ENCODE measurements at regions of chr4 and their contacts with region 1.

Region 1: DNA sequence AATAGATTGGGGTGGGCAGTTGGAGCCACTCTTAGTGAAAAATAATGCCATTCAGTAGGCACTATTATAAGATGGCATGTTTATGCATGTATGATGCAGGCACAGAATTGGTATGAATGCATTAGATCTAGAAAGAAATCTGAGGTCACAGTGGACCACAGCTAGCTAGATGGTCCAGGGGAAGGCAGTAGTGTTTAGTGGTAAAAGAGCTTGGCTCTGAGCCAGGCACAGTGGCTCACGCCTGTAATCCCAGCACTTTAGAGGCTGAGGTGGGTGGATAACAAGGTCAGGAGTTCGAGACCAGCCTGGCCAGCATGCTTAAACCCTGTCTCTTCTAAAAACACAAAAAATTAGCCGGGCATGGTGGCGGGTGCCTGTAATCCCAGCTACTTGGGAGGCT is 43.2 kb upstream of the SLC34A2 start:
- DNase-seq: no peak
- ATAC-seq: no peak
- H3K4me3 ChIP-seq: no peak overlapping the region
- H3K27ac ChIP-seq: peak overlapping the region; percentile 27
- H3K4me1 ChIP-seq: peaks cover 6% of the 10 kb centered on the region; the same call in 1 of the 2 replicates
- H3K27me3 ChIP-seq: no peaks in the 10 kb centered on the region
- CTCF ChIP-seq: no peak

Region 2: DNA sequence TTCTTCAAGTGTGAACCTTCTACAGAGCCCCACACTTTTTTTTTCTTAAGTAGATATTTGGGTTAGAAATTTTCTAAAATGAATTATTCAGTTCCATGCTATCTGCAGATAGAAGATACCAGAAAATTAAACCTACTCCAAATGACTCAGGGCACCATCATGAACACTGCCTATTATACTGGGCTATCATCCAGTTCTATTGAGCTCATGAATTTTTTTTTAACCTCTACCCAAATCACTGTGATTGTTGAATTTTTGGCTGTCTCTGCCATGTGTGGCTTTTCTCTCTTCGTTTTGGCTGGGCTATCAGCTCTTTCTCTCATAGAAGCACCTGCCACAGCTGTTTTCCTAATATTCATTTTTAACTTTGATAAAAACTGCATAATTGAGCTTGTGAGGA is 12.1 kb after region 1 on chr4:
- CTCF ChIA-PET with region 1: no interaction called
- POLR2A ChIA-PET with region 1: interaction called, 14 read pairs
- intact Hi-C with region 1: no loop called
- DNase-seq: peak; percentile 42
- ATAC-seq: peak; percentile 31; the same call in 1 of the 2 replicates
- H3K4me3 ChIP-seq: no peak overlapping the region
- H3K27ac ChIP-seq: no peak overlapping the region
- H3K4me1 ChIP-seq: peaks cover 4% of the 10 kb centered on the region; the same call in 1 of the 2 replicates
- H3K27me3 ChIP-seq: no peaks in the 10 kb centered on the region
- CTCF ChIP-seq: no peak